Dendritic cell treated with granulocyte-macrophage colony-stimulating factor and Interleukin-4, amounts not matched to agents 40 ng/mL and 50 ng/mL, for 4 days (primary cell): ENCODE measurements at regions of chr12 and their contacts with region 1.

Region 1: DNA sequence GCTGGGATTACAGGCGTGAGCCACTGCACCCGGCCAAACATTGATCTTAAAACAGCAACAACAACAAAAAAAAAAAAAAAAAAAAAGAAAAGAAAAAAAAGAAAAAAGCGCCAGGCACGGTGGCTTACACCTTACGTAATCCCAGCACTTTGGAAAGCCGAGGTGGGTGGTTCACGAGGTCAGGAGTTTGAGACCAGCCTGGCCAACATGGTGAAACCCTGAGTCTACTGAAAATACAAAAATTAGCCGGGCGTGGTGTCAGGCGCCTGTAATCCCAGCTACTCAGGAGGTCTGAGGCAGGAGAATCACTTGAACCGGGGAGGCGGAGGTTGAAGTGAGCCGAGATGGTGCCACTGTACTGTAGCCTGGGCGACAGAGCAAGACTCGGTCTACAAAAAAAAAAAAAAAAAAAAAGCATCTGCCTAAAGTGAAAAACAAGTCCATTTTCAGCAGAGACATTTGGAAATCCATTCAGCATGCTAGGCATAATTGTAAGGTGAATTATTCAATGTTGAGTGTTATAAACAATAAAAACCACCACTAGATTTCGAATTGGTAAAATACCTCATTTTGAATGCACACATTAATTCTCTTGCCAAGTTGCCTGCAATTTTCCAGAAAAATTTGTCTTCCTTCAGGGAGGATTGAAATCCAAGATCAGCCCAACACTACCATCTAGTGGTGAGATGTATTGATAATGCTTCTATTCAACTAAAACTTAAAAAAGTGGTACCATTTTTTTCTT is 8.0 kb upstream of the CERS5 start:
- H3K4me3 Mint-ChIP-seq: no peak overlapping the region
- H3K27ac Mint-ChIP-seq: no peak overlapping the region
- H3K4me1 Mint-ChIP-seq: peaks cover 6% of the 10 kb centered on the region
- H3K27me3 Mint-ChIP-seq: no peaks in the 10 kb centered on the region

Region 2: DNA sequence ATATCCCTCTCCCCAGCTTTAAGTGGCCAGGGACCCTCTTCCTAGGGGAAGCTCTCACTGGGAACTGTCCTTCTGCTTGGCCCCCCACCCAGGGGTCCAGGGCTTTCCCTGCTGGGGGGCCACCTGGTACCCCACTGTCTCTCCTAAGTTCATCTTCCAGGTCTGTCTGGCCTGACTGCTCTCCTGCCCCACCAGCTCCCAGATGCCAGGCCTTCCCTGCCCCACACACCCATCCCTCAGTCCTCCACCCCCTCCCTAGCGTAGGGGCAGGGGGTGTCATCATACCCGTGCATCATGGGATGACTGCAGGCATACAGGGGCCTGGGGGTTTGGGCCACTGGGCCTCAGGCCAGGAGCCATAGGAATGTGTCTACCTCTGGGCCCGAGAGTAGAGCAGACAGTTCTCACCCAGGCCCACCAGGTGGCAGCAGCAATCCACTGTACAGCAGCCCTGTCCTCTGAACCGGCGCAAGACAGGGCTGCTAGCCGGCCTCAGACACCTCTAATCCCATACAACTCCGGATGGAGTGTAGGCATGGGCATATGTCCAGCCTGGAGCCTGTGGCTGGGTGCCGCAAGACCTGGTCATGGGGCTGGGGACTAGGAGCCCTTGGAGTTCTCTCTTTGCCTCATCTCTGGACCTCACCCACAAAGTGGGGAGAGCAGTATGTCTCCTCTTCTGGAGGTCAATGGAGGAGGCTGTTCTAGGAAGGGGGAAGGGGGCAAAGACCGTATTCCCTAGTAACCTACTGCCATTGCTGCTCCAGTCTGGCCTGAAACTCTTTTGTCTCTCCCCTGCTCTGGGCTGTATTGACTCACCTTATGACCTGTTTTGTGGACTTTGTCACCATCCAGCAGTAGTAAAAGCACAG is 100.0 kb before region 1 on chr12:
- intact Hi-C with region 1: loop called (anchors 1 kb)
- H3K4me3 Mint-ChIP-seq: no peak overlapping the region
- H3K27ac Mint-ChIP-seq: no peak overlapping the region
- H3K4me1 Mint-ChIP-seq: peaks cover 9% of the 10 kb centered on the region
- H3K27me3 Mint-ChIP-seq: peaks cover 39% of the 10 kb centered on the region

Region 3: GRCh38 chr12:50132505-50133135 is 42.5 kb before region 1 on chr12:
- intact Hi-C with region 1: loop called (anchors 1 kb)
- H3K4me3 Mint-ChIP-seq: no peak overlapping the region
- H3K27ac Mint-ChIP-seq: no peak overlapping the region
- H3K4me1 Mint-ChIP-seq: peaks cover 31% of the 10 kb centered on the region
- H3K27me3 Mint-ChIP-seq: no peaks in the 10 kb centered on the region

Region 4: GRCh38 chr12:50224026-50224692 is 49.0 kb after region 1 on chr12:
- intact Hi-C with region 1: no loop called
- H3K4me3 Mint-ChIP-seq: no peak overlapping the region
- H3K27ac Mint-ChIP-seq: no peak overlapping the region
- H3K4me1 Mint-ChIP-seq: peaks cover 5% of the 10 kb centered on the region
- H3K27me3 Mint-ChIP-seq: no peaks in the 10 kb centered on the region